ENCODE measurements at regions of chr15 and their contacts with region 1.

Region 1: GRCh38 chr15:74857082-74857655 is 14.2 kb upstream of the ULK3 start:
- DNase-seq: peak; percentile 78
- ATAC-seq: peak; percentile 91
- H3K4me3 ChIP-seq: peak overlapping the region; percentile 35; the same call in 1 of the 2 replicates
- H3K27ac ChIP-seq: peak overlapping the region; percentile 80
- H3K4me1 ChIP-seq: peaks cover 46% of the 10 kb centered on the region
- H3K27me3 ChIP-seq: no peaks in the 10 kb centered on the region
- CTCF ChIP-seq: no peak
- EP300 ChIP-seq: no peak
- POLR2A ChIP-seq: peak; percentile 35
- RAD21 ChIP-seq: no peak

Region 2: GRCh38 chr15:74615508-74616365 is 241.4 kb before region 1 on chr15 and contains the start of gene CLK3:
- CTCF ChIA-PET with region 1: no interaction called
- POLR2A ChIA-PET with region 1: no interaction called
- RAD21 ChIA-PET with region 1: no interaction called
- SMC1A ChIA-PET with region 1: no interaction called
- in situ Hi-C with region 1: no loop called
- intact Hi-C with region 1: no loop called
- DNase-seq: peak; percentile 79
- ATAC-seq: peak; percentile 89
- H3K4me3 ChIP-seq: peak within 1 kb of the TSS; percentile 89
- H3K27ac ChIP-seq: peak within 1 kb of the TSS; percentile 97
- H3K4me1 ChIP-seq: peaks cover 17% of the 10 kb centered on the region
- H3K27me3 ChIP-seq: no peaks in the 10 kb centered on the region; a peak in 1 of 4 replicates
- CTCF ChIP-seq: no peak
- EP300 ChIP-seq: peak in 1 of 2 experiments; percentile 11; a peak in 1 of 4 replicates
- POLR2A ChIP-seq: peak; percentile 75
- RAD21 ChIP-seq: no peak
- polyA plus RNA-seq, gene CLK3: 3.3 to 5.8 TPM

Region 3: DNA sequence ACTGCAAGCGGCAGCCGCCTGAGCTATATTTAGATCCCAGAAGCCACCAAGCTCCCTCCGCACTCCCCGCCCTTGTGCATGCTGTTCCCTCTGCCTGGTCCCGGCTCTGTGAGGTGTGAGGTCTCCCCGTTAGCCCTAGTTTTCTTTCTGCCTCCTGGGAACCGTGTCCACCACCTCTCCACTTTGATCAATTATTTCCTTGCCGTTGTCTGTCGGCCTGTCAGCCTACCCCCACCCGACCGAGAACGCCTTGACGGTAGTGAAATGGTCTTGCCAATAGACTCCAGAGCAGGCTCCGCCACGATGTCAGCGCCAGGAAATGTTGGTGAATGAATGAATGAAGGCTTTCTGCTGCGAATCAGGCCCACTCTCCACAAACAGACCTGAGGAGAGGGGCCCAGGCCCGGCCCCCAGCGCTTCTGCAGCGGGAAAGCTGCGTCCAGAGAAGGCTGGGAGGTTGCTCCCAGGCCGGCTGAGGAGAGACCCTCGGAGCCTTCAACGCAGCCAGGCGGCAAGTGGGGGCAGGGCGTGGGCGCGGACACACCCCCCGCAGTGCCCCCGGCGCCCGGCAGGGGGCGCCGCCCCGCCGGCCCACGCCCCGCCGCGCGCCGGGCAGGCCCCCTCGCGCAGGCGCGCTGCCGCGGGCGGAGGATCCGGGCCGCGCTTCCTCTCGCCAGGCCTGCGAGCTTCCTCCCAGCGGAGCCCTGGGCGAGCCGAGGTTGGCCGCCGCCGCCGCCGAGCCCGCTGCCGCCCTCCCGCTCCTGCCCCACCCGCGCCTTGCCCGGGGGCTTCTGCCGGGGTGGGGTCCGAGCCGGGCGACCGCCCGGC is 75.5 kb before region 1 on chr15 and contains the start of gene CSK:
- CTCF ChIA-PET with region 1: interaction called, 4 read pairs
- POLR2A ChIA-PET with region 1: interaction called, 5 read pairs
- RAD21 ChIA-PET with region 1: interaction called, 3 read pairs
- SMC1A ChIA-PET with region 1: interaction called, 10 read pairs
- in situ Hi-C with region 1: no loop called
- intact Hi-C with region 1: no loop called
- DNase-seq: no peak
- ATAC-seq: no peak; the same call in 2 of the 3 replicates
- H3K4me3 ChIP-seq: peak within 1 kb of the TSS; percentile 94
- H3K27ac ChIP-seq: peak within 1 kb of the TSS; percentile 96
- H3K4me1 ChIP-seq: peaks cover 59% of the 10 kb centered on the region
- H3K27me3 ChIP-seq: no peaks in the 10 kb centered on the region
- CTCF ChIP-seq: peak; percentile 52 to 62 (median 62); a peak in 5 of 6 replicates
- EP300 ChIP-seq: peak in 1 of 2 experiments; percentile 6; a peak in 1 of 4 replicates
- POLR2A ChIP-seq: peak; percentile 78
- RAD21 ChIP-seq: peak; percentile 28; the same call in 1 of the 2 replicates
- polyA plus RNA-seq, gene CSK: 3.4 to 11.5 TPM

Region 4: DNA sequence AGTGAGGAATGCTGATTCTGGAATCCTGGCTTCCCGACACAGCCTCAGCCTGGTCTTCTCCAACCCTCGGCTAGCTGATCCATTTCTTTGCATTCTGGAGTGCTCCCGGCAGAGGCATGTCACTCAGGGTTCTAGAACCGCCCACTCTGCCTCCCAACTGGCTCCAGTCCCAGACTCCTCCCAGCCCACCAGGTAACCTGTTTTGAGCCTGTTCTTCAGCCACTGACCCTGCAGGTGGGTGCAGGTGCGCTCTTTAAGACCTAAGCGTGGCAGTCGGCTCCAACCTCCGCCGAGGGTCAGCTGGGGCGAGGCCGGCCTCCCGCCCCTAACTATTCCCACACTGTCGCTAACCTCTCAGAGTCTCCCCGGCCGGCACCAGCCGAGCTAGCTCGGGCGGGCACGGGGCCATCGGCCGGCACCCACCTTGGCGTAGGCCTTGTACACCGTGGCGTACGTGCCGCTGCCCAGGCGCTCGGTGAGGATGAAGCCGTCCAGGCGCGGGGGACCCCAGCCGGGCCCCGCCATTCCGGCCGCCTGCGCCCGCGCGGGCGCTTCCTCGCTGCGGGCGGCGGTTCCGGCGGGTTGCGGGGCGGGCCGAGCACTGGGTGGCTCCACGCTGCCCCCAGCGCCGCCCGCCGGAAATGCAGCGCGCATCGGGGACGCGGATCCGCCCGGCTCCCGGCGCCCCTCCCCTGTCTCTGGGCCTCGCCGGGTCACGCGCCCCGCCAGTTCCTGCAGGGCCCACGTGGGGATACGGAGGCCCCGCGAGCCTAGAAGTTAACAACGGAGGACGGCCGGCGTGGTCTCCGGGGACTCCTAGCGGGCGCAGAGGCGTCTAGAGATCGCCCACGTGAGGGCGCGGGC is 14.4 kb before region 1 on chr15 and contains the start of gene ULK3:
- CTCF ChIA-PET with region 1: interaction called, 11 read pairs
- POLR2A ChIA-PET with region 1: interaction called, 3 read pairs
- RAD21 ChIA-PET with region 1: interaction called, 9 read pairs
- SMC1A ChIA-PET with region 1: no interaction called
- in situ Hi-C with region 1: no loop called
- intact Hi-C with region 1: no loop called
- DNase-seq: no peak
- ATAC-seq: peak; percentile 95
- H3K4me3 ChIP-seq: peak within 1 kb of the TSS; percentile 86
- H3K27ac ChIP-seq: peak within 1 kb of the TSS; percentile 80
- H3K4me1 ChIP-seq: peaks cover 13% of the 10 kb centered on the region
- H3K27me3 ChIP-seq: no peaks in the 10 kb centered on the region
- CTCF ChIP-seq: peak; percentile 45 to 60 (median 50); a peak in 5 of 6 replicates
- EP300 ChIP-seq: no peak
- POLR2A ChIP-seq: peak; percentile 75
- RAD21 ChIP-seq: peak; percentile 26
- polyA plus RNA-seq, gene ULK3: 0.64 to 1.4 TPM

Region 5: GRCh38 chr15:74884428-74885223 is 27.5 kb after region 1 on chr15:
- CTCF ChIA-PET with region 1: interaction called, 10 read pairs
- POLR2A ChIA-PET with region 1: interaction called, 4 read pairs
- RAD21 ChIA-PET with region 1: interaction called, 11 read pairs
- SMC1A ChIA-PET with region 1: interaction called, 15 read pairs
- in situ Hi-C with region 1: no loop called
- intact Hi-C with region 1: no loop called
- DNase-seq: no peak
- ATAC-seq: no peak
- H3K4me3 ChIP-seq: no peak overlapping the region
- H3K27ac ChIP-seq: no peak overlapping the region
- H3K4me1 ChIP-seq: peaks cover 17% of the 10 kb centered on the region
- H3K27me3 ChIP-seq: no peaks in the 10 kb centered on the region
- CTCF ChIP-seq: no peak
- EP300 ChIP-seq: no peak
- POLR2A ChIP-seq: no peak
- RAD21 ChIP-seq: no peak

Region 6: DNA sequence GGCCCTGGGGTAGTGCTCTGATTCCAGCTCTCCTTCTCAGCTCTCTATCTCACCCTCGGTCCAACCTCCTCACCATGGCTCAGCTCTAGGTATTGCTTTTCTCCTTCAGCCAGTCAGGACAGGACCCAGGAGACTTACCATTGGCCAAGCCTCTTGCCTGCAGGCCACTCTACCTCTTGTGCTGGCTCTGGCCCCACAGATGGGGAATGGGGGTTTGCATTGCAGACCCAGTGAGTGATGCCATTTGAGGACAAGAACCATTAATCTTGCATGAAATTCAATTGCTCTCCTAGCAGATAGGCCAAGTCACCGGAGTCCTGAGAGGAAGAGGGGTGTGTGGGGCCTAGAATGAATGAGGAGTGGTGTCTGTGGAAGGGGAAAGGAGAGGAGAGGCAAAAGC is 105.5 kb after region 1 on chr15:
- CTCF ChIA-PET with region 1: no interaction called
- POLR2A ChIA-PET with region 1: no interaction called
- RAD21 ChIA-PET with region 1: no interaction called
- SMC1A ChIA-PET with region 1: no interaction called
- in situ Hi-C with region 1: no loop called
- intact Hi-C with region 1: no loop called
- DNase-seq: no peak
- ATAC-seq: no peak
- H3K4me3 ChIP-seq: no peak overlapping the region
- H3K27ac ChIP-seq: no peak overlapping the region
- H3K4me1 ChIP-seq: peaks cover 16% of the 10 kb centered on the region
- H3K27me3 ChIP-seq: peaks cover 7 to 10% of the 10 kb centered on the region in 2 experiments
- CTCF ChIP-seq: no peak
- EP300 ChIP-seq: no peak
- POLR2A ChIP-seq: no peak
- RAD21 ChIP-seq: no peak

Measured in GM12878 (cell line).